ENCODE measurements at regions of chr4 and their contacts with region 1.

Region 1: GRCh38 chr4:10018818-10019461 is 2.4 kb downstream of the SLC2A9 start:
- DNase-seq: peak; percentile 96
- H3K4me3 Mint-ChIP-seq: peak overlapping the region; percentile 85
- H3K27ac Mint-ChIP-seq: peak overlapping the region; percentile 84
- H3K4me1 Mint-ChIP-seq: peaks cover 5% of the 10 kb centered on the region
- H3K27me3 Mint-ChIP-seq: no peaks in the 10 kb centered on the region

Region 2: DNA sequence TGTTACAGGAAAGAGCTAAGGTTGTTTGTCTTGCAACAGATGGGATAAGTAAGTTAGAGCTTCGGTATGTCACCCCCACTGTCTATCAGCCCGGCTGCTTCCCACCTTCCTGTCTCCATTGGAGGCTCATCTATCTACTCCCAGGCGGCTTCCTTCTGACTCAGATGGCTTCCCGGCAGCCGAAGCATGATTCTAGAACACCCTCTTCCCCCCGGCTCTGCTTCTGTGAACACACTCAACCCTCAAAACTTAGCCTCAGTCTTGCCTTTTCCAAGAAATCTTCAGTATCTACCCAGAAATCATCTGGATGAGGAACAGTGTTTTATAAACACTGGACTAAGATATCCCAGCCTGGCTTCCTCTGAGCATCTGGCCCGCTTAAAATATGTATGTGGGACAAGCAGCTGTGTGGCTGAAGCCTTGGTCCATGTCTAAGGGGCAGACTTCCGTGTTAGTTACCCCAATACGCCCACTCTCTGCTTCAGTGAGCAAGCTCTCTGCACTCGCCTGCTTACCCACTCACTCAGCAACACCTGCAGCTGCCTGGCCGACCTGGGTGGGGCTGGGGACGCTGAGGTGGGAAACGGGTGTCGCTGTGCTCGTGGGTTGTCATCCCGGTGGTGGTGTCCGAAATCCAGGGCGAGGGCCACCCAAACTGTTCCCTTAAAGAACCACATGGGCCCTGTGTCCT is 14.4 kb after region 1 on chr4:
- CTCF ChIA-PET with region 1: interaction called, 14 read pairs
- intact Hi-C with region 1: no loop called
- DNase-seq: no peak
- H3K4me3 Mint-ChIP-seq: no peak overlapping the region
- H3K27ac Mint-ChIP-seq: no peak overlapping the region
- H3K4me1 Mint-ChIP-seq: peaks cover 5% of the 10 kb centered on the region
- H3K27me3 Mint-ChIP-seq: peaks cover 10% of the 10 kb centered on the region

Region 3: DNA sequence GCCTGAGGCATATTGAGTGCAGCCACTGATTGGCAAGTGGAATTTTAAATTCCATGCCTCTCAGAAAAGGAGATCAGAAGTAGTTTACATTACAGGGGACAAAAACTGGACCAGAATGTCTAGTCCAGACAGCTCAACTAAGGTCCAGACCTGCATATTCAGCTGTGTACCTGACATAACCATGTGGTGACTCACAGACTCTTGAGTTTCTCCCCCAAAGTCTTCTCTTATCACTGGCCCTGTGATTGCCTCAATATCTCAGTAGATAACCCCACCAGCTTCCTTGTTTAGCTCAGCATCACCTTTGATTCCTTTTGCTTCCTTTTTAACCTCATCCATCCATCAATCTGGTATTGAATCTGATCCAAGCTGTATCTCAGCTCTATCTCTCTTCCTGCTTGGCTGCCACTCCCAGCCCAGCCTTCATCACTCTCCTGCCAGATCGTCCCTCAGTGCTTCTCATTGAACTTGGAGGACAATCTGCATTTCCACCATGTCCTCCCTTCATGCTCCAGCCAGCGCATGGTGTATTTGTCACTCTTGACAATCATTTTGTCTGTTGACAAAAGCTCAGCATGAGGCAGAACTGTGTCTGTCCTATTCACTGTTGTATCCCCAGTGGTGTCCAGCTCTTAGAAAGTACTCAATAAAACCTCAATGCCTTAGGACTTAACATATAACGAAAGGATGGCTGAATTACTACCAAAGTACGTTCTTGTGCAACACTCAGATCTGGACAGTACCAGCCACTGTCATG is 30.2 kb after region 1 on chr4:
- CTCF ChIA-PET with region 1: no interaction called
- intact Hi-C with region 1: no loop called
- DNase-seq: no peak
- H3K4me3 Mint-ChIP-seq: no peak overlapping the region
- H3K27ac Mint-ChIP-seq: no peak overlapping the region
- H3K4me1 Mint-ChIP-seq: no peaks in the 10 kb centered on the region
- H3K27me3 Mint-ChIP-seq: no peaks in the 10 kb centered on the region

Region 4: GRCh38 chr4:10096201-10096977 is 77.4 kb after region 1 on chr4:
- CTCF ChIA-PET with region 1: interaction called, 7 read pairs
- intact Hi-C with region 1: loop called (anchors 2 kb)
- DNase-seq: peak; percentile 90
- H3K4me3 Mint-ChIP-seq: no peak overlapping the region
- H3K27ac Mint-ChIP-seq: peak overlapping the region; percentile 81
- H3K4me1 Mint-ChIP-seq: peaks cover 91% of the 10 kb centered on the region
- H3K27me3 Mint-ChIP-seq: no peaks in the 10 kb centered on the region

Region 5: DNA sequence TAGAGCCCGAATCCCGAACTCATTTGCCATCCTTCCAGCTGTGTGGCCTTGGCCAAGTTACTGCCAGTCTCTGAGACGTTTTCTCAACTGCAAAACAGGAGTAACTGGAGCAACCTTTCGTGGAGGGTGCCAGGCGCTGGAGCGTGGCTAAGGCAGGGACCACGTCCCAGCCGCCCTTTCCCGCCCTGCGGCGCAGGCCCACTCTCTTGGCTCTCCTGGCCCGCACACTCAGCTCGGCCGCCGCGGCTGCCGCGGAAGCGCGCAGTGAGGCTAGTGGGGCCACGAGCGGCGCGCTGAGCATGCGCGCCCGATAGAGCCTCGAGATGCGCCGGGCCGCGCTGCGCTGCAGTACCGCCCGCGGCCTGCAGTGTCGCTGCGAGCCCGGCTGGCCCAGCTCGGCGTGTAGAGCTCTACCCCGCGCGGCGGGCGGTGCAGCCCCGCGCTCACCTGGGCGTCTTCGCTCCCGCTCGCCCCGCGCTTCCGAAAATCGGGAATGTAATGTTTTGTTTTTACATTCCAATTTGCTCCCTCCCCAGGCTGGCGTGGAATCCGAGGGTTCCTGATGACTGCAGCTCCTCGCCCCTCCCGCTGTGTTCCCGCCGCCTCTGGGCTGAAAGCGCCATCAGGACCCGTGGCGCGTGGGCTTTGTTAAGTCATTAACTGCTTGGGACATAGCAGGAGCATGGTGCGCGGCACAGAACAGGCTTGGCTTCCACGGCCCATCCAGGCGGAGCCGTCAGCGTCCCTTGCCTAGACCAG is 442.3 kb after region 1 on chr4:
- CTCF ChIA-PET with region 1: interaction called, 3 read pairs
- intact Hi-C with region 1: loop called (anchors 2 kb)
- DNase-seq: peak; percentile 65
- H3K4me3 Mint-ChIP-seq: peak overlapping the region; percentile 76
- H3K27ac Mint-ChIP-seq: no peak overlapping the region
- H3K4me1 Mint-ChIP-seq: peaks cover 25% of the 10 kb centered on the region
- H3K27me3 Mint-ChIP-seq: peaks cover 32% of the 10 kb centered on the region